ENCODE measurements at regions of chr21 and their contacts with region 1.

Region 1: GRCh38 chr21:44949779-44950198 is 10.0 kb downstream of the SLX9 start:
- DNase-seq: peak in 9 of 10 donors; percentile 51 to 95 (median 77)

Region 2: GRCh38 chr21:45074048-45074817 is 124.4 kb after region 1 on chr21 and contains the start of gene ADARB1:
- intact Hi-C with region 1: loop called (anchors 10 kb)
- DNase-seq: peak; percentile 37 to 94 (median 65)

Region 3: DNA sequence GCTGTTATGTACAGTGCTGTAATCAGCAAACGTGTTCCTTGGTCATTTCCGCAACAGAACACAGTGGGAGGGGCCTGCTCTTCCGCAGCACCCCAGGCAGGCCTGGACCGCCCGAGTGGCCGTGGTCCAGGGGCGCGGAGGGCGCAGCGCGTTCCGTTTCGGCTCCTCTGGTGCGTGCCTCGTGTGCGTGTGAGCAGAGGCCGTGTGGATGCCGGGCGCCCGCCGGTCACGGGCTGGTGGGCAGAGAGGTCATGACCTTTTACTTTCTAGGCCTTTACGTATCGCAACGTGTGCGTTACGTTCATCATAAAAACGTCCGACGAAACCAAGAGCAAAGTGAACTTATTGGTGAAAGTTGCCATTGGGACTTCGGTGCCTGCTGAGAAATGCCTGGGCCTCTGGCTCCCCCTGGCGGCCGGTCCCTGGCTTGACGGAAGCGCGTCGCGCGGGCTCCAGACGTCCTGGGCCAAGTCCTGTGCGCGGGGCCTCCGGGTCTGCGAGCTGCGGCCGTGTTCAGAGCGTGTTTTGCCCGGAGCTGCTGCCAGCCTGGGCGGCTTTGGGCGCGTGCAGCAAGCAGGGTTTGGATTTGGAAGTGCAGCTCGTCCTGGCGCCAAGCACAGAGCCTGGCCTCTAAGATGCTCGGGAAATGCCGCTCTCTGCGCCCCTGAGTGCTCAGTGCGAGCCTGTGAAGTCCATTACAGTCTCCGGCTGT is 489.5 kb after region 1 on chr21:
- intact Hi-C with region 1: loop called (anchors 10 kb)
- DNase-seq: peak; percentile 66 to 97 (median 86)

Measured in posterior cingulate gyrus (tissue), 11 donors.